ENCODE measurements at regions of chr17 and their contacts with region 1.

Region 1: GRCh38 chr17:81238817-81239600 is at the starts of genes NDUFAF8 and TEPSIN:
- DNase-seq: peak; percentile 98
- ATAC-seq: peak; percentile 97
- H3K4me3 Mint-ChIP-seq: peak within 1 kb of the TSS; percentile 95
- H3K27ac Mint-ChIP-seq: peak within 1 kb of the TSS; percentile 97
- H3K4me1 Mint-ChIP-seq: peaks cover 31% of the 10 kb centered on the region
- H3K27me3 Mint-ChIP-seq: no peaks in the 10 kb centered on the region
- CTCF ChIP-seq: no peak
- total RNA-seq, gene NDUFAF8: 72.3 to 75.4 TPM
- total RNA-seq, gene TEPSIN: 28.2 to 32.2 TPM

Region 2: DNA sequence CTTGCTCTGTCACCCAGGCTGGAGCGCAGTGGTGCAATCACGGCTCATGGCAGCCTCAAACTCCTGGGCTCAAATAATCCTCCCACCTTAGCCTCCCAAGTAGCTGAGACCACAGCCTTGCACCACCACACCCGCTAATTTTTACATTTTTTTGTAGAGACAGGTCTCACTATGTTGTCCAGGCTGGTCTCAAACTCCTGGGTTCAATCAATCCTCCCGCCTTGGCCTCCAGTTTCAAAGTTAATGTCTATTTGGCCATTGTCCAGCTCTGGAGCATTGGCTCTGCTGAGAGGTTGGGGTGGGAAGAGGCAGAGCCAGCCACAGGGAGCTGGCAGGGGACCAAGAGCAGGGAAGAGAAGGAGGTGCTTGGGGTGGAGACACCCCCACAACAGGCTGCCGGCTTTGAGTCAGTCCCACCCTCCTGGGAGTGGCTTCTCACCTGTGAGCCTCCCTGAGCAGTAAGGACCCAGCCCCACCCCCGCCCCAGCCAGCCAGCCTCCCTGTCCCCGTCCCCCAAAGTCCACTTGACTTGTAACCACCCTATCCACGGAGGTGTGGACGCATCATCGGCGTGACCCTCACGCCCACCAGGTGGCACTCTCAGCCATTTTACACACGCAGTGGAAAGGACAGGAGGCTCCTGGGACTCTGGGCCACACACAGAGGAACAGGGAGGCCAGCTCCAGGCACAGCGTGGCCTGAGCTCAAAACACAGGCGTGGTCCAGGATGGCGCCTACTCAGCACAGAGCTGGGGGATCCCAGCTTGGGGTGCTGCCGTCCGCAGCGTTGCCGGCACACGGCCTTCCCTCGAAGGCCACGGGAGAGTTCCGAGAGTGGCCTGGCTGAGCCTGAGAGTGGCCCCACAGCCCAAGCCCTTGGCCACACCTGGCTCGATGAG is 96.5 kb before region 1 on chr17:
- CTCF ChIA-PET with region 1: interaction called, 30 read pairs
- POLR2A ChIA-PET with region 1: no interaction called
- intact Hi-C with region 1: loop called (anchors 5 kb)
- DNase-seq: peak; percentile 82
- ATAC-seq: peak; percentile 91
- H3K4me3 Mint-ChIP-seq: no peak overlapping the region
- H3K27ac Mint-ChIP-seq: no peak overlapping the region
- H3K4me1 Mint-ChIP-seq: no peaks in the 10 kb centered on the region
- H3K27me3 Mint-ChIP-seq: peaks cover 2% of the 10 kb centered on the region
- CTCF ChIP-seq: peak; percentile 44

Region 3: DNA sequence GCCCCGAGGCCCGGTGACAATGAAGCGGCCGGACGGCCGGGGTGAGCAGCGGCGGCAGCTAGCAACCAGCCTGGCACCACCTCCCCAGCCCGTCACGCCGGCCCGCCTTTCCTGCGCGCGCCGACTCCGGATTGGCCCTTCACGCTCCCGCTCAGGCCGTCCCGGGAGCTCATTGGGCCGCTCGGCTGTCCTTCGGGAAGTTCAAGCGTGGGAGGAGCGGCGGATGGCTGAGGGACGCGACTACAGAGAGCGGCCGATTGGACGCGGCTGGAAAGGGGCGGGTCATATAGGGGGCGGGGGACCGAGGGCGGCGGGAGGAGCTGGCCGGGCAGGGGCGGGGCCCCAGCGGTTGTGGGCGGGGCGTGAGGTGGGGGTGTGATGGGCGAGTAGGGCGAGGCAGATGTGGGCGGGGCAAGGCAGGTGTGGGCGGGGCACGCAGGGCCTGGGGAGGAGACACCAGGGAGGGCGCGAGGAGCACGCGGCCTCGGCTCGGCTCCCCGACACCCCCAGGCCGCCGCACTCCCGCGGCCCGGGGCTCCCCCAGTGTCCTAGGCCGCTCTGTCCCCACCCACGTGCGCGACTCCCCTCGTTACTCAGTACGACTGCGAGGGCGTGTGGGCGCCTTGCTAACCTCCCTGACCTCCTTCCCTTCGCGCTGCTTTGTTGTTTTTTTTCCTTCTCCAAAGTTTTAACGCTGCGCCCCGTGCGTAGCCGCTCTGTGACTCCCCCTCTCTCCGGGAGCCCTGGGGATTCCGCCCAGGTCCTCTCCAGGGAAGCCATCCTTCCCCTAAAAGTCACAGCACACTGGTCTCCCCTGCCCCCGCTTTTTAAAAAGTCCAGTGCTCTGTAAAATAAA is 15.9 kb before region 1 on chr17 and contains the start of gene CEP131:
- CTCF ChIA-PET with region 1: interaction called, 4 read pairs
- POLR2A ChIA-PET with region 1: interaction called, 26 read pairs
- intact Hi-C with region 1: no loop called
- DNase-seq: peak; percentile 99
- ATAC-seq: peak; percentile 93
- H3K4me3 Mint-ChIP-seq: peak within 1 kb of the TSS; percentile 69
- H3K27ac Mint-ChIP-seq: peak within 1 kb of the TSS; percentile 88
- H3K4me1 Mint-ChIP-seq: peaks cover 20% of the 10 kb centered on the region
- H3K27me3 Mint-ChIP-seq: no peaks in the 10 kb centered on the region
- CTCF ChIP-seq: no peak
- total RNA-seq, gene CEP131: 7.9 to 10.9 TPM